ENCODE measurements at regions of chr1 and their contacts with region 1.

Region 1: DNA sequence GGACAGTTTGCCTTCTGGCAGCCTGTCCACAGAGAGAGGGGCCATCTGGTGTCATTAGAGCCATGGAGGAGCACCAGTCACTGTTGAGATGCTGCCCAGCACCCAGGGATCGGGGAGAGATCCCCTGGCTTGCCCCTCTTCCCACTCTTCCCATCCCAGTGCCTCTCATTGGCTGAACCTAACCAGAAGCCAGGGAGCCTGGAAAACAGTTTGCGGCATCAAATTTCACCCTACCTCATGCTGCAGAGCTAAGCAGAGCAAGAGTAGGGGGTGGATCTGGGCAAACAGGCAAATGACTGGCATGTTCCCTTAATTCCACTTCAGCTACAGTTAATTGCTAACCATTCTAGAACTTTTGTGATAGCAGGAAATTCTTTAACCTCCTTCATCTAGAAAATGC is 19.1 kb downstream of the TRAF5 start:
- DNase-seq: no peak
- H3K4me3 ChIP-seq: no peak overlapping the region
- H3K4me3 Mint-ChIP-seq: peak overlapping the region in 1 of 8 donors; percentile 21
- H3K27ac ChIP-seq: no peak overlapping the region
- H3K27ac Mint-ChIP-seq: peak overlapping the region in 6 of 7 donors; percentile 13 to 62 (median 52)
- H3K4me1 ChIP-seq: peaks cover 94% of the 10 kb centered on the region
- H3K4me1 Mint-ChIP-seq: peaks cover 67 to 97% (median 83%) of the 10 kb centered on the region in 4 donors
- H3K27me3 ChIP-seq: no peaks in the 10 kb centered on the region
- H3K27me3 Mint-ChIP-seq: no peaks in the 10 kb centered on the region

Region 2: DNA sequence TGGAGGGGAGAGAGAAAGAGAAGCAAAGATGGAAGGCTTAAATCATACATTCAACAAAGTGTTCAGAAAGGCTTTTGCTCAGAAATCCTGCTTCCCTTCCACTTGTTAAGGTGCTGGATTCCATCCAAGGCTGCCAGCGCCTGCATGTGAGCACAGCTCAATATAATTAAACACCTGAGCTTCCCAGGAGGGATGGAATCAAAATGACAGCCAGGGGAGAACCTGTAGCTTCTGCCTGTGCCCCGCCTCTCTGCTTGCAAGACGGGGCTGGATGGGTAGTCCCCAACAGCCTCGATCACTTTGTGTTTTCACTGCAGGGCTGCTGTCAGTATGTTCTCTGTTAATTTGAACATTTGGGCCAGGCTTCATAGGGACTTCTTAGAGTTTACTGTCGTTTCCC is 437.5 kb before region 1 on chr1:
- CTCF ChIA-PET with region 1: no interaction called
- POLR2A ChIA-PET with region 1: no interaction called
- intact Hi-C with region 1: no loop called
- DNase-seq: no peak
- H3K4me3 ChIP-seq: no peak overlapping the region
- H3K4me3 Mint-ChIP-seq: no peak overlapping the region
- H3K27ac ChIP-seq: no peak overlapping the region
- H3K27ac Mint-ChIP-seq: no peak overlapping the region
- H3K4me1 ChIP-seq: no peaks in the 10 kb centered on the region
- H3K4me1 Mint-ChIP-seq: no peaks in the 10 kb centered on the region
- H3K27me3 ChIP-seq: no peaks in the 10 kb centered on the region
- H3K27me3 Mint-ChIP-seq: peaks cover 8 to 21% of the 10 kb centered on the region in 2 donors

Region 3: GRCh38 chr1:211329764-211330201 is 15.9 kb before region 1 on chr1:
- CTCF ChIA-PET with region 1: interaction called, 250 read pairs
- POLR2A ChIA-PET with region 1: interaction called, 80 read pairs
- intact Hi-C with region 1: no loop called
- DNase-seq: peak in 2 of 5 donors; percentile 24 to 26
- H3K4me3 ChIP-seq: no peak overlapping the region
- H3K4me3 Mint-ChIP-seq: peak overlapping the region; percentile 97 to 98 (median 98)
- H3K27ac ChIP-seq: peak overlapping the region; percentile 73
- H3K27ac Mint-ChIP-seq: peak overlapping the region; percentile 89 to 99 (median 97)
- H3K4me1 ChIP-seq: peaks cover 87% of the 10 kb centered on the region
- H3K4me1 Mint-ChIP-seq: peaks cover 66 to 91% (median 79%) of the 10 kb centered on the region in 4 donors
- H3K27me3 ChIP-seq: no peaks in the 10 kb centered on the region
- H3K27me3 Mint-ChIP-seq: no peaks in the 10 kb centered on the region

Region 4: DNA sequence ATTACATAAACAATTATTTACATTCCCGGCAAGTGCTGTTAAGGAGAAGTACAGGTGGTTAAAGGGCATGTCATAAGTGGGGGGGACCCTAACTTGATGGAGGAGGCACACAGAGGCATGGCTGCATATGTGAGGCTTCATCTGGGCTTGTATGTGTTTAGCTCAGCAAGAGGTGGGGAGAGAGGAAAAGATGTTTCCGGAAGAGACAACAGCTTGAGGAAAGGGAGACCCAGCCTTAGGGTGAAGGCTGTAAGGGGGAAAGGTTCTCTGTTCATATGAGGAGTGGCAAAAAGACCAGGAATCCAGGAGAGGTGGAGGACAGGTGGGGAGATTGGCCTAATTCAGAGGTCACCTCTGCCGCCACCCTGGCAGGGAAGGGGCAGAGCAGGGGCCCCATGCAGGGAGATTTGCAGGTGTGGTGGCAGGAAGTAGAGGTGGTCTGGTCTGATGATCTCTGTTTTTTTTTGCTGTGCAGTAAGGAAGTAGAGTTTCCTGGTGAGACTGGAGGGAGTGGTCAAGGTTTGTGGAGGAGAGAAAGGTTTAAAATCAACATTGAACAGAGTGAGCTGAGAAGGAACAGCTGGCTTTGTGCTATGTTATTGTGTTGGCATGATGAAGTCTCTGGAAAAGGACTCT is 10.1 kb before region 1 on chr1:
- CTCF ChIA-PET with region 1: interaction called, 250 read pairs
- POLR2A ChIA-PET with region 1: interaction called, 27 read pairs
- intact Hi-C with region 1: no loop called
- DNase-seq: peak; percentile 25 to 50 (median 43)
- H3K4me3 ChIP-seq: peak overlapping the region; percentile 30 to 49
- H3K4me3 Mint-ChIP-seq: peak overlapping the region; percentile 75 to 90 (median 82)
- H3K27ac ChIP-seq: peak overlapping the region; percentile 57
- H3K27ac Mint-ChIP-seq: peak overlapping the region; percentile 88 to 96 (median 92)
- H3K4me1 ChIP-seq: peaks cover 99% of the 10 kb centered on the region
- H3K4me1 Mint-ChIP-seq: peaks cover 74 to 100% (median 88%) of the 10 kb centered on the region in 4 donors
- H3K27me3 ChIP-seq: no peaks in the 10 kb centered on the region
- H3K27me3 Mint-ChIP-seq: no peaks in the 10 kb centered on the region

Region 5: GRCh38 chr1:212110617-212111016 is 764.9 kb after region 1 on chr1:
- CTCF ChIA-PET with region 1: no interaction called
- POLR2A ChIA-PET with region 1: no interaction called
- intact Hi-C with region 1: no loop called
- DNase-seq: no peak
- H3K4me3 ChIP-seq: no peak overlapping the region
- H3K4me3 Mint-ChIP-seq: no peak overlapping the region
- H3K27ac ChIP-seq: no peak overlapping the region
- H3K27ac Mint-ChIP-seq: no peak overlapping the region
- H3K4me1 ChIP-seq: no peaks in the 10 kb centered on the region
- H3K4me1 Mint-ChIP-seq: peaks cover 3 to 7% (median 5%) of the 10 kb centered on the region in 4 donors
- H3K27me3 ChIP-seq: no peaks in the 10 kb centered on the region
- H3K27me3 Mint-ChIP-seq: no peaks in the 10 kb centered on the region

Measured in CD4-positive, alpha-beta memory T cell (primary cell).